Astrocyte of the cerebellum (primary cell): ENCODE measurements at regions of chr5 and their contacts with region 1.

Region 1: GRCh38 chr5:142082182-142082781 is 26.3 kb upstream of the NDFIP1 start:
- DNase-seq: no peak
- H3K4me3 ChIP-seq: no peak overlapping the region
- CTCF ChIP-seq: no peak

Region 2: DNA sequence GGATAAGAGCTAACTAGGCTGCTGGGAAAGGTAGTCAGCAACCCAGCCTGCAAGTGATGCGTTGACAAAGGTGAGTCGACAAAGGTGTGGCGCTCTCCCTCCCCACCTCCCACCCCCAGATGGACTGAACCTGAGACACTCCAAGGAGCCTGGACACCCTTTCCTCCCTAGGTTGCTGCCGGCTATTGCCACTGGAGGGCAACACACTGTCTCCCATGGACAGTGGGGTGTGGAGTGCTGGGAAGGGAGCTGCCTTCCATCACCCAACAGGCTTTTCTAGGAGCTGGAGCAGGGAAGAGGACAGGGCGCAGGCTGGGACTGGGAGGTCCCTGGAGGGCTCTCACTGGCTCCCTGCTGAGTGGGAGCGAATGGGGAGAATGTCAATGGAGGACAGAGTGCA is 324.9 kb before region 1 on chr5:
- in situ Hi-C with region 1: no loop called
- DNase-seq: no peak
- H3K4me3 ChIP-seq: no peak overlapping the region
- CTCF ChIP-seq: peak; percentile 30

Region 3: DNA sequence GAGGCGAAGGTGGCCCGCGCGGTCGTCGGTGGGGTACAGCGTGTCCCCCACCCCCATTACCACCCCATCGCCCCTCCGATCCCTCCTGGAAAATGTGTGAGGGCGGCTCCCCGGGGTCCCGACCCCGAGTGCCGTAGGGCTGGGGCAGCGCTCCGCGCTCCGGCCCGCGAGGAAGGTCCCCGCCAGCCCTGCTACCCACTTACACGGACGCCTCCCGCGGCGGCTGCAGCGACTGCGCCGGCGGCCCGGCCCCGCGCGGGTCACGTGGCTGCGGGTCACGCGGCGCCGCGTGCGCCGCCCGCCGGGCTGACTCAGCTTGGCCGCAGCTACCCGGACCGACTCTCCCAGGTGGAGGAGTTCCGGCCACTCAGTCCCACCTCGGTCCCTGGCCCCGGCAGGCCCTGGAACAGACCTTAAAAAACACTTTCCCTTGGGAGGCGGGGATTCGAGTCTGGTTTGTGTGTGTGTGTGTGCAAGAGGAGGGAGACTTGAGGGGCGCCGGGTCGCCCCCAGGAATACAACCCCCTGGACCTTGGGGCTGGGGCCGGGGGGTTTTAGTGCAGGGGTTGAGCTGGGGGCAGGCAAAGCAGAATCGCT is 69.4 kb before region 1 on chr5 and contains the start of gene GNPDA1:
- in situ Hi-C with region 1: loop called (anchors 5 kb)
- DNase-seq: no peak
- H3K4me3 ChIP-seq: peak within 1 kb of the TSS; percentile 68
- CTCF ChIP-seq: no peak